SK-N-SH (cell line): ENCODE measurements at regions of chr15 and their contacts with region 1.

Region 1: DNA sequence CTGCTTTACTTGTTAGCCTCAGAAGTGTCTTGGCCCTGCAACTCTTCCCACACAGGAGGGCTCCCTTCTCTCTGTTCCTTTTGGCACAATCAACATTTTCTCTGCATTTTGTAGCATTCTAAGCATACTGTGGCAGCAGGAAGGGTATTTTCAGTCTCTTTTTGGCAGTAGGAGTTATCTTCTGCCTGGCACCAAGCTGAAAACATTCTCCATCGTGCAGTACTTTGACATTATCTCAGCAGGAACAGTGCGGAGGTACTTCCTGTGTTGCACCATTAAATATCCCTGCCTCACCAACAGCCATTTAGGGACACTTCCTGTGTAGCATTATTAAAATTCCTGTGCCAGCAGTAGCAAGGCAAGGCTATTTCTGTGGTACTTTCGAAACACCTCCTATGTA is 233.2 kb upstream of the SEMA6D start:
- DNase-seq: no peak
- H3K4me3 ChIP-seq: no peak overlapping the region
- H3K27ac ChIP-seq: no peak overlapping the region
- H3K4me1 ChIP-seq: peaks cover 0 to 5% of the 10 kb centered on the region in 2 experiments; a peak in 1 of 4 replicates
- H3K27me3 ChIP-seq: no peaks in the 10 kb centered on the region
- CTCF ChIP-seq: no peak
- EP300 ChIP-seq: no peak
- RAD21 ChIP-seq: no peak

Region 2: GRCh38 chr15:47473832-47474231 is 10.2 kb before region 1 on chr15:
- CTCF ChIA-PET with region 1: interaction called, 10 read pairs
- POLR2A ChIA-PET with region 1: no interaction called
- DNase-seq: no peak
- H3K4me3 ChIP-seq: no peak overlapping the region
- H3K27ac ChIP-seq: no peak overlapping the region
- H3K4me1 ChIP-seq: peaks cover 0 to 2% of the 10 kb centered on the region in 2 experiments; a peak in 2 of 4 replicates
- H3K27me3 ChIP-seq: no peaks in the 10 kb centered on the region
- CTCF ChIP-seq: no peak
- EP300 ChIP-seq: no peak
- RAD21 ChIP-seq: no peak